ENCODE measurements at regions of chr17 and their contacts with region 1.

Region 1: DNA sequence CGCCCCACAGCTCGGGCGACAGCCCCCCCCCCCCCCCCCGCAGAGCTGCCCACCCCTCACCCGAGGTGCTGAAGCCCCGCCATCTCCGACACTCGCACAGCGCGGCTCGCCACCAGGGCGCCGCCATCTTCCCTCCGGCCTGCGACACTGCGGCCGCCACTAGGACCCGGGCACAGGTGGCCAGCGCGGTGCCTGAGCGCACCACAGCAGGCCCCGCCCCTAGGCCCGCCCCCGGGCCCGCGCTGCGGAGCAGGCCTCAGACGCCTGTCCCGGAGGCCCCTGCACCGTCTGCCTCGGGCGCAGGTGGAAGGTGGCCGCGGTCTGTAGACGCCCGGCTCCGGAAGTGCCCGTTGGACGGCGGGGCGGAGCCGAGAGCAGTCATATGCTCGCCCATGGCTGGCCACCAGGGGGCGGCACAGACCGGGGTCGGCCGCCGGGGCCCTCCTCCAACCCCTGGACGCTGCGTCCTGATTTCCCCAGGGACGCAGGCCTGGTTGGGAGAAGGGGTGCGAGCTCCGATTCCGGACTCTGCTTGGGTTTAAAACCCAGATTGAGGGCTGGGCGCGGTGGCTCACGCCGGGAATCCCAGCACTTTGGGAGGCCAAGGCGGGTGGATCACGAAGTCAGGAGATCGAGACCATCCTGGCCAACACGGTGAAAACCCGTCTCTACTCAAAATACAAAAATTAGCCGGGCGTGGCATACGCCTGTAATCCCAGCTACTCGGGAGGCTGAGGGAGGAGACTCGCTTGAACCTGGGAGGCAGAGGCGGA is at the start of gene MRPL38:
- DNase-seq: peak; percentile 99
- H3K4me3 Mint-ChIP-seq: peak within 1 kb of the TSS; percentile 97
- H3K27ac Mint-ChIP-seq: peak within 1 kb of the TSS; percentile 93
- H3K4me1 Mint-ChIP-seq: peaks cover 12% of the 10 kb centered on the region
- H3K27me3 Mint-ChIP-seq: no peaks in the 10 kb centered on the region
- total RNA-seq, gene MRPL38: 151 and 157 TPM in 2 replicates

Region 2: DNA sequence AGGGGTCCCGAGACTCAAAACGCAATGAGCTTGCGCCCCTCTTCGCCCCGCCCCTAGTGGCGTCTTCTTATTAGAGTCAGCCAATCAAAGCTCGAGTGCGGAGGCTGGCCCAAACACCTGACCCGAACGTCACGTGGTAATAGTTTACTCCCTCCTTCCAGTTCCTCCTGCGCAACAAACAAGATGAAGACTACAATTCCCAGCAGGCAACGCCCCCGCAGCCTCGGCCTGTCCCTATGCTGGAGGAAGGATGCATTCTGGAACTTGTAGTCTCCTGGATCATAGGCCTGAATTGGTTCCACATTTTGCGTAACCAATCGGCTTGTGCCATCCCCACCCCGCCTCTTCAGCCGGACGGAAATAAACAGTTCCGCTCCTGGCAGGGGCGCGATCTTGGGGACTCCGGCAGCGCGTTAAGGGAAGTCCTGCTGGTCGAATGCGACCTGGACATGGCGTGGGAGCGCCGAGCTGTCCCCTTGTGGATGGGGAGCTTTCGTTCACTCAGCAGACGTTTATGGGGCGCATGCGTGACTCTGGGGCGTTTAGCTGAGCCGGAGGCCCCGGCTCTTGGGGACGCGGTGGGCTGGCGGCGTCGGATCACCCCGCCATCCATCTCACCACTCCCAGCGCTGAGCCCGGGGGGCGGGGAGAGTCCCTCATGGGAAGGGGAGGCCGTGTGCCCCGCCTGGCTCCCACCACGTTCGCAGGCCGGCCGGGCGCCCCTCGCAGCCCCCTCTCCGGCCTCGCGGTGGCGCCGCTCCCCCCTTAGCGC is 49.4 kb before region 1 on chr17 and contains the start of gene WBP2:
- intact Hi-C with region 1: loop called (anchors 1 kb)
- DNase-seq: peak; percentile 99
- H3K4me3 Mint-ChIP-seq: no peak within 1 kb of the TSS
- H3K27ac Mint-ChIP-seq: peak within 1 kb of the TSS; percentile 92
- H3K4me1 Mint-ChIP-seq: peaks cover 31% of the 10 kb centered on the region
- H3K27me3 Mint-ChIP-seq: no peaks in the 10 kb centered on the region
- total RNA-seq, gene WBP2: 68.9 and 70.0 TPM in 2 replicates

Region 3: GRCh38 chr17:75940724-75941441 is 35.9 kb after region 1 on chr17 and contains the start of gene FBF1:
- intact Hi-C with region 1: loop called (anchors 2 kb)
- DNase-seq: peak; percentile 97
- H3K4me3 Mint-ChIP-seq: peak within 1 kb of the TSS; percentile 92
- H3K27ac Mint-ChIP-seq: peak within 1 kb of the TSS; percentile 77
- H3K4me1 Mint-ChIP-seq: peaks cover 12% of the 10 kb centered on the region
- H3K27me3 Mint-ChIP-seq: no peaks in the 10 kb centered on the region
- total RNA-seq, gene FBF1: 17.5 and 18.6 TPM in 2 replicates

Region 4: GRCh38 chr17:75978938-75979704 is 74.2 kb after region 1 on chr17 and contains the starts of genes ACOX1 and TEN1:
- intact Hi-C with region 1: loop called (anchors 2 kb)
- DNase-seq: peak; percentile 98
- H3K4me3 Mint-ChIP-seq: peak within 1 kb of the TSS; percentile 98
- H3K27ac Mint-ChIP-seq: peak within 1 kb of the TSS; percentile 97
- H3K4me1 Mint-ChIP-seq: peaks cover 30% of the 10 kb centered on the region
- H3K27me3 Mint-ChIP-seq: no peaks in the 10 kb centered on the region
- total RNA-seq, gene ACOX1: 29.2 and 30.0 TPM in 2 replicates
- total RNA-seq, gene TEN1: 9.7 and 12.5 TPM in 2 replicates

Region 5: GRCh38 chr17:76005263-76006149 is 100.6 kb after region 1 on chr17:
- intact Hi-C with region 1: loop called (anchors 1 kb)
- DNase-seq: peak; percentile 96
- H3K4me3 Mint-ChIP-seq: no peak overlapping the region
- H3K27ac Mint-ChIP-seq: peak overlapping the region; percentile 34
- H3K4me1 Mint-ChIP-seq: peaks cover 5% of the 10 kb centered on the region
- H3K27me3 Mint-ChIP-seq: no peaks in the 10 kb centered on the region

Region 6: GRCh38 chr17:76072148-76072858 is 167.4 kb after region 1 on chr17 and contains the start of gene SRP68:
- intact Hi-C with region 1: loop called (anchors 10 kb)
- DNase-seq: peak; percentile 96
- H3K4me3 Mint-ChIP-seq: peak within 1 kb of the TSS; percentile 99
- H3K27ac Mint-ChIP-seq: peak within 1 kb of the TSS; percentile 100
- H3K4me1 Mint-ChIP-seq: peaks cover 36% of the 10 kb centered on the region
- H3K27me3 Mint-ChIP-seq: peaks cover 29% of the 10 kb centered on the region
- total RNA-seq, gene SRP68: 169 and 170 TPM in 2 replicates

Region 7: DNA sequence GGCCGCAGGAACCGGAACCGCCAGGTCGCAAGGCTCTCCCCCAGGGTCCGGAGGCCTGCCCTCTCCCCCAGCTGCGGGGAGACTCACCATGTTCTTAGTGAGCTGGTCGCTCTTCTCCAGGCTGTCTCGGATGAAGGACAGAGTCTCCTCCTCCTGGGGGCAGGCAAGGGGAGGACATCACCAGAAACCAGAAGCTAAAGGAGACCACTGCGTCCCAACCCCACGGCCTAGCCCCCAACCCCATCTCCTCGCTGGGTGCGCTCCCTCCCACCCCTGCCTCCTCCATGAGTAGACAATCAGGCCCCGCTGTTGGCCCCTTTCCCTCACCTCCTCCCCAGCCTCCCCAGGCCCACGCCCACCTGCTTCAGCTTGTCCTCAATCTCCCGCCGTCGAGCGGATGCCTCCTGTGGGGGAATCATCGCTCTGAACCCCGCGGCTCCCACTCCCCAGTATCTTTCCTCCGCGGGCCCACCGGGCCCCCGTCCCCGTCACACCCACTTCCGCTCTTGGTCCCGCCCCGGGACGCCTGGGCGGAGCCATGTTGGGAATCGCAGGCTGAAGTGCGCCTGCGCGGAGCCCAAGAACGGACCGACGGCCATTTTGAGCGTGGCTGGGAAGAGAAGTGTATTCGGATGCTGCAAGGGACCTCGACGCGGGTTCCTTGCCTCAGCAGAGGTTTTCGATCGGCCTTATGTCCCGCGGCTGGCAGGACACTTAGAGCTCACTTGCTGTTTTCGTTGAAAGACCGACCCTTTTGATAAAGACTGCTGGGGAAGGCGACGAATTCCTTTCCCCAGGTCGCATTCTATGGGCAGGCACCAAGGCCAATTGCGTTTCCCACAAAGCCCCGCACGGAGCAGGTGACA is 198.6 kb after region 1 on chr17 and contains the start of gene EXOC7:
- intact Hi-C with region 1: loop called (anchors 10 kb)
- DNase-seq: peak; percentile 99
- H3K4me3 Mint-ChIP-seq: peak within 1 kb of the TSS; percentile 99
- H3K27ac Mint-ChIP-seq: peak within 1 kb of the TSS; percentile 97
- H3K4me1 Mint-ChIP-seq: peaks cover 20% of the 10 kb centered on the region
- H3K27me3 Mint-ChIP-seq: no peaks in the 10 kb centered on the region
- total RNA-seq, gene EXOC7: 104 and 108 TPM in 2 replicates

Measured in activated CD4-positive, alpha-beta T cell treated with anti-CD3 and anti-CD28 coated beads, Interleukin-2, amount 10 ng/mL, durations not matched to agents 24 days and 14 days (primary cell).